GM12878 (cell line): ENCODE measurements at regions of chr1 and their contacts with region 1.

Region 1: GRCh38 chr1:238119060-238119459 is 228.3 kb upstream of the ZP4 start:
- DNase-seq: no peak
- ATAC-seq: peak; percentile 79
- H3K4me3 ChIP-seq: no peak overlapping the region
- H3K27ac ChIP-seq: no peak overlapping the region
- H3K4me1 ChIP-seq: no peaks in the 10 kb centered on the region
- H3K27me3 ChIP-seq: no peaks in the 10 kb centered on the region
- CTCF ChIP-seq: peak in 1 of 3 experiments; percentile 21; a peak in 2 of 6 replicates
- EP300 ChIP-seq: no peak
- POLR2A ChIP-seq: no peak
- RAD21 ChIP-seq: peak; percentile 15; the same call in 1 of the 2 replicates

Region 2: DNA sequence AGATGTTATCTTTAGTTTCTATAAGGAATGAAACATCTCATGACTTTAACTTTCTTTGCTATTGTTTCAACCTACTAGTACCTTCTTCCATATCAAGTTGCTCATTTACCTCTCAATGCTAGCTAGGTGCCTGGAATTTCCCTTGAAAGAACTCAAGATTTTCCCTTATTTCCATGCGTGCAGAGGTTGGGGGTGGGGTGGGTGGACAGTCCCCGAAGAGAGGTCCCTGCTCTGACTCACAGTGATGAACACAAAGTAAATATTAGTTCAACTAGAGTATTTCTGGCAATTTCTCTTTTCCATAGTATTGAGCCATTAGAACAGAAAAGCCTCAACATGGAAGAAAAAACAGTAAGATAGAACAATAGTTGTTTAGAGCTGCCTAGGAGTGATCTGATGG is 10.6 kb after region 1 on chr1:
- CTCF ChIA-PET with region 1: interaction called, 4 read pairs
- POLR2A ChIA-PET with region 1: interaction called, 4 read pairs
- RAD21 ChIA-PET with region 1: no interaction called
- SMC1A ChIA-PET with region 1: interaction called, 15 read pairs
- in situ Hi-C with region 1: no loop called
- intact Hi-C with region 1: no loop called
- DNase-seq: no peak
- ATAC-seq: no peak; the same call in 2 of the 3 replicates
- H3K4me3 ChIP-seq: no peak overlapping the region
- H3K27ac ChIP-seq: no peak overlapping the region
- H3K4me1 ChIP-seq: no peaks in the 10 kb centered on the region
- H3K27me3 ChIP-seq: no peaks in the 10 kb centered on the region
- CTCF ChIP-seq: no peak
- EP300 ChIP-seq: no peak
- POLR2A ChIP-seq: no peak
- RAD21 ChIP-seq: no peak

Region 3: GRCh38 chr1:238232084-238232710 is 113.1 kb after region 1 on chr1:
- CTCF ChIA-PET with region 1: interaction called, 10 read pairs
- POLR2A ChIA-PET with region 1: no interaction called
- RAD21 ChIA-PET with region 1: no interaction called
- SMC1A ChIA-PET with region 1: interaction called, 7 read pairs
- in situ Hi-C with region 1: no loop called
- intact Hi-C with region 1: no loop called
- DNase-seq: no peak
- ATAC-seq: peak; percentile 47
- H3K4me3 ChIP-seq: no peak overlapping the region
- H3K27ac ChIP-seq: no peak overlapping the region
- H3K4me1 ChIP-seq: no peaks in the 10 kb centered on the region
- H3K27me3 ChIP-seq: no peaks in the 10 kb centered on the region
- CTCF ChIP-seq: no peak
- EP300 ChIP-seq: no peak
- POLR2A ChIP-seq: no peak
- RAD21 ChIP-seq: no peak